ENCODE measurements at regions of chr10 and their contacts with region 1.

Region 1: DNA sequence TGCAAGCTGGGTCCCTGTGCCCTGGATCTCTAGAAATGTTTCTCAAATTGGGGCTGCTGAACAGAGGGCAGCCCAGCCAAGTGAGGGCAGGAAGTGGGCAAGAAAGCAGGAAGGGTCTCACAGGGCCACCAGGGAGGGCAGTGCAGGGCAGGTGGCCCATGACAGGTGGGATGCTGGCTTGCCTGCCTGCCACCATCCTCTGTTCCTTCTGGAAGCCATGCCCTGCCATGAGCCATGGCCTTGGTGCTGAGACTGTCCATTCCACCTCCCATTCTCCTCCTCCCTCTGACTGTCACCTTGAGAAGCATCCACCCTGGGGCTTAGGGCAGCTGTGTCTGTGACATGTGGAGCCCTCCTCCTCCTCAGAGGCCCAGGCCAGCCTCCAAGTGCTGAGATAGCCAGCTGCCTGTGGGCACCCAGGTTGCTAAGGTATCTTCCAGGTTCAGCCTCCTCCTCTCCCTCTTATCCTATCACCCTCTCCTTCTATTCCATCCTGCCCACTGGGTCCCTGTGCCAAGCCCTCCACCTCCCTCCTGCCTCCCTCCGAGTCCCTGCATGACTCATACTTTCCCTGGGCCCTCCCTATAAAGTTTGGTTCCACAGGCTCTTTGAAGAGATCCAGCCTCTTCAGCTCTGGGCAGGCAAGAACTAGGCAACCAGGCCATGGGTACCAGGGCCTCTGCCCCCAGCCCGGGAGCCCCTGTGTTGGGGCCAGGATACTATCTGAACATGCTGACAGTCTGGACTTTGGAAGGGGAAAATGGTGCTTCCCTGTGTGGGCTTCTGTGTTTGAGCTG is 1.3 kb downstream of the VSIR start:
- DNase-seq: no peak
- ATAC-seq: no peak
- H3K4me3 Mint-ChIP-seq: peak overlapping the region; percentile 88
- H3K27ac Mint-ChIP-seq: peak overlapping the region; percentile 87
- H3K4me1 Mint-ChIP-seq: peaks cover 95% of the 10 kb centered on the region
- H3K27me3 Mint-ChIP-seq: no peaks in the 10 kb centered on the region
- CTCF ChIP-seq: no peak

Region 2: DNA sequence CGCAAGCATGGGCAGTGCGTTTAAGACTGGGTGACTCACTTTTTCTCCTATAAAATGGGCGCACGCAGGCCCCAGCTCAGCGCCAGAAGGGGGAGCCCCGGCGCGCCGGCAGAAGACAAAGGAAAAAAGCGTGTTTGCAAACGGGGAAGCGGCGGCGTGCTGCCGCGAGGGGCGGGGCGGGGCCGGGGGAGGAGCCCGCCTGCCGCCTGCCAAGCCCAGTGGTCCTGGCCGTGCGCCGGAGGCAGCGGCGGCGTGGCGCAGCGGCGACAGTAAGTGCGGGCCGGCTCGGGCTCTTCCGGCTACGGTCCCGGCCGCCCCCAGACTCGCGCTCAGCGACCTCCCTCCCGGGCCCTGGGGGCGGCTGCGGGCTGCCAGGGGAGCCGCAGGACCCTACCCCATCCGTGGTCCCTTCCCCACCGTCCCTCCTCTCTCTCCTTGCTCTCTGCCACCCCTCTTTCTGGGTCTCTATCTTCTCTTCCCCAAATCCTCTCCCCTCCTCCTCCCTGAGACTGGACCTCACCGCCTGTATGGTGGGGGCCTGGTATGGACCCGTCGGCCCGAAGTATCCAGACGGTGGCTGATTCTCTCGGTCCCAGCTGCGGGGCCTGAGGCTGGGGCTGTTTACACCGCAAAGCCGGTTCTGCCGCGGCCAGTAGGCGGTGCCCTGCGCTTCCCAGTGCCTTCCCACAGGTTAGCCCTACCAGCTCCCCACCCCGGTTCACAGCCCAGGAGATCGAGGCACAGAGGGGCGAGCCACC is 452.8 kb before region 1 on chr10 and contains the start of gene SLC29A3:
- CTCF ChIA-PET with region 1: interaction called, 3 read pairs
- POLR2A ChIA-PET with region 1: interaction called, 3 read pairs
- intact Hi-C with region 1: loop called (anchors 1 kb)
- DNase-seq: peak; percentile 72
- ATAC-seq: peak; percentile 90
- H3K4me3 Mint-ChIP-seq: peak within 1 kb of the TSS; percentile 96
- H3K27ac Mint-ChIP-seq: peak within 1 kb of the TSS; percentile 80
- H3K4me1 Mint-ChIP-seq: peaks cover 13% of the 10 kb centered on the region
- H3K27me3 Mint-ChIP-seq: no peaks in the 10 kb centered on the region
- CTCF ChIP-seq: no peak
- total RNA-seq, gene SLC29A3: 3.1 and 4.3 TPM in 2 replicates

Region 3: DNA sequence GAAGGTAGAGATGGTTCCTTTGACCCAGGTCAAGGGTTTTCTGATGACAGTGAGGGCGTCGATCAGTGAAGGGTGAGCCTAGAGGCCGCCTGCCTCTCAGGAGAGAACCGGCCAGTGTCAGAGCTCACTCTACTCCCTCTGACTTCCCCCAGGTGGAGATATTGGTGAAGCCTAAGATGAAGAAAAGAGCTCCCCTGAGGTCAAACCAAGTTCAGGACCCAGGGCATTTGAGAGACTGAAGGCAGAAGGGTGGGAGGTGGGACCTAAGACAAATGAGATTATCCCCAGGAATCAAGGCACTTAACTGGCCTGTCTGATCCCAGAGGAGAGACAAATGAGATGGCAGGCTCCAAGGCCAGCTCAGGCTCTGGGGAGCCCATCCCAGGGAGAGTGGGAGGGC is 270.6 kb before region 1 on chr10:
- CTCF ChIA-PET with region 1: no interaction called
- POLR2A ChIA-PET with region 1: no interaction called
- intact Hi-C with region 1: no loop called
- DNase-seq: no peak
- ATAC-seq: no peak
- H3K4me3 Mint-ChIP-seq: no peak overlapping the region
- H3K27ac Mint-ChIP-seq: no peak overlapping the region
- H3K4me1 Mint-ChIP-seq: no peaks in the 10 kb centered on the region
- H3K27me3 Mint-ChIP-seq: peaks cover 12% of the 10 kb centered on the region
- CTCF ChIP-seq: no peak

Region 4: GRCh38 chr10:71696628-71697326 is 75.2 kb before region 1 on chr10:
- CTCF ChIA-PET with region 1: interaction called, 10 read pairs
- POLR2A ChIA-PET with region 1: interaction called, 19 read pairs
- intact Hi-C with region 1: loop called (anchors 1 kb)
- DNase-seq: peak; percentile 59
- ATAC-seq: no peak
- H3K4me3 Mint-ChIP-seq: no peak overlapping the region
- H3K27ac Mint-ChIP-seq: no peak overlapping the region
- H3K4me1 Mint-ChIP-seq: peaks cover 63% of the 10 kb centered on the region
- H3K27me3 Mint-ChIP-seq: no peaks in the 10 kb centered on the region
- CTCF ChIP-seq: peak; percentile 27

Region 5: DNA sequence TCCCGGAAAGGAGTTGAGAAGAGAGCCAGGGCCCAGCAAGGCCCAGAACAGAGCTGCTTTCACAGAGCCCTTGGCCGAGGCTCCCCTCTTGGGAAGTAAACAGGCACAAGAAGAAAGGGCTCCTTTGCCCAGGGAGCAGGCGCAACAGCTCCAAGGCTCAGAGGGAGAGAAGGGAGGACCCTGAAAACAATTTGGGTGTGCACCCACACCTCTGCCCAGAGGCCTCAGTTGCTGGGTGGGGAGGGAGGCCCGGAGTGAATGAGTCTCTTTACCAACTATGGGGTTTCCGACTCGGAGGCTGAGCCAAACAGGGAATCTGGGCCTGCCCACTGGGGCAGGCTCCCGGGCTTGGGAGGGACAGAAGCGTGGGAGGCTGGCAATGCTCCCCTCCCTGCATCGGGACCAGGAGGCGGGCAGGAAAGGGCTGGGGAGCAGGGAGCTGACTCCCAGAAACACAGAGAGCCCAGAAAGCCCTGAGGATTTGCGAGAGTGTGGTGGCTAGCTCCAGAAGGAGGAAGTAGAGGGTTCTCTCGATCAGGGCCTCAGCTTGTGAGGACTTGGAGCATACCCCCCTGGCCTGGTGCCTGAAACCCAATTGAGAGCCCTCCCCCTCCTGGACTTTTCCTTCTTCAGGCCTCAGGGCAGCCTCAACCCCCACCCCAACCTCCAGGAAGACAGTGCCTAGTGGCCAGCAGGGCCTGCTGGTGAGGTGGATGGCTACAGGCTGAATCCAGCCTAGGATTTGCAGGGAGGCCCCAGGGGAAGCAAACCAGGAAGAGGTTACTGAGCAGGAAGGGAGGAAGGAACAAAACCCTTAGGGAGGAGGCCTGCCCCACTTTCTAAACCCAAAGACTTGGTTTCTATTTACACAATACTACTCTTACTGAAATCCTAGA is 58.6 kb before region 1 on chr10:
- CTCF ChIA-PET with region 1: interaction called, 17 read pairs
- POLR2A ChIA-PET with region 1: interaction called, 8 read pairs
- intact Hi-C with region 1: loop called (anchors 5 kb)
- DNase-seq: no peak
- ATAC-seq: peak; percentile 45
- H3K4me3 Mint-ChIP-seq: no peak overlapping the region
- H3K27ac Mint-ChIP-seq: no peak overlapping the region
- H3K4me1 Mint-ChIP-seq: peaks cover 41% of the 10 kb centered on the region
- H3K27me3 Mint-ChIP-seq: no peaks in the 10 kb centered on the region
- CTCF ChIP-seq: no peak

Region 6: GRCh38 chr10:71748671-71749191 is 23.3 kb before region 1 on chr10:
- CTCF ChIA-PET with region 1: interaction called, 10 read pairs
- POLR2A ChIA-PET with region 1: interaction called, 21 read pairs
- intact Hi-C with region 1: loop called (anchors 1 kb)
- DNase-seq: peak; percentile 53
- ATAC-seq: peak; percentile 77
- H3K4me3 Mint-ChIP-seq: peak overlapping the region; percentile 69
- H3K27ac Mint-ChIP-seq: peak overlapping the region; percentile 95
- H3K4me1 Mint-ChIP-seq: peaks cover 81% of the 10 kb centered on the region
- H3K27me3 Mint-ChIP-seq: no peaks in the 10 kb centered on the region
- CTCF ChIP-seq: no peak

Region 7: DNA sequence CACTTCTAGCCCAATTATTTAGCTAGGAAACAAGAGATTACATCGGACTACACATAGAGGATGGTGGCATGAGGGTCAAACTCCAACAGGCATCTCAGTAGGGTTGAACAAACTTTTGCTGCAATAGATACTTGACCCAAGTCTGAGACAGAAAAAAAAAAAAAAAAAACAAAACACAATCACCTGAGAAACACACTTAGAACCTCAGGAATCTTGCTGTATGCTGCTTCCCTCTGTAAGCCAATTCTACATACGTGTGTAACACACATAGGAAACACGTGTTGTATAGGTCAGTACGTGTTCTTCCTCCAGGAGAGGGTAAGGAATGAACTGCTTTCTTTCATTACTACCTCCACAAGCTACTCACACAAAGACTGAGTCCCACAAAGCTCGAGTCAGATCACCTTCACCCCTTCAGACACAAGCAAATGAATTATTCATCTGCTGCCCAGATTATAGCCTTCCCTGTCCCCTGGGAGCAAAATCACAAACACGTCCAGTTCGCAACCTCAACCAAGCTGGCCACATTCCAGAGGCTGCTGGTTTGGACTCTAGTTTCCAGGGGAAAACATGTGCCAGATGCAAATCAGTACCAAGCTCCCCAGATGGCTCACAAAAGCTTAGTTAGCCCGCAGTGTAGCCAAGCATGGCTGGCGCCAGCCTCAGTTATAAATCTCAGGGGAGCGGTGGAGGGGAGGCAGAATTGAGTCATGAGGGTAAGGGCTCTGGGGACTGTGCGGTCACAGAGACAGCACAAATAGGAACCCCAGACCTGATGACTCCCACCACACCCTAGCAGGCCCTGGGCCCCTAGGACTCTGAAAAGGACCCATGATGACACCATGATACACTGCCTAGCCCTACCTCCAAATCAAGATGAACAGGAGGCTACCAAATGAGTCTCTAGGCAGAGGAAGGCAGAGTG is 63.9 kb after region 1 on chr10:
- CTCF ChIA-PET with region 1: interaction called, 3 read pairs
- POLR2A ChIA-PET with region 1: interaction called, 9 read pairs
- intact Hi-C with region 1: loop called (anchors 1 kb)
- DNase-seq: peak; percentile 84
- ATAC-seq: peak; percentile 92
- H3K4me3 Mint-ChIP-seq: peak overlapping the region; percentile 79
- H3K27ac Mint-ChIP-seq: peak overlapping the region; percentile 95
- H3K4me1 Mint-ChIP-seq: peaks cover 88% of the 10 kb centered on the region
- H3K27me3 Mint-ChIP-seq: no peaks in the 10 kb centered on the region
- CTCF ChIP-seq: no peak

Region 8: GRCh38 chr10:71888623-71889387 is 116.8 kb after region 1 on chr10:
- CTCF ChIA-PET with region 1: no interaction called
- POLR2A ChIA-PET with region 1: interaction called, 3 read pairs
- intact Hi-C with region 1: loop called (anchors 1 kb)
- DNase-seq: peak; percentile 82
- ATAC-seq: peak; percentile 94
- H3K4me3 Mint-ChIP-seq: peak overlapping the region; percentile 87
- H3K27ac Mint-ChIP-seq: peak overlapping the region; percentile 92
- H3K4me1 Mint-ChIP-seq: peaks cover 39% of the 10 kb centered on the region
- H3K27me3 Mint-ChIP-seq: no peaks in the 10 kb centered on the region
- CTCF ChIP-seq: no peak

Measured in activated B cell treated with CpG ODN at 0.5 μM for 24 hours (primary cell).